SK-MEL-5 (cell line): ENCODE measurements at regions of chr5 and their contacts with region 1.

Region 1: DNA sequence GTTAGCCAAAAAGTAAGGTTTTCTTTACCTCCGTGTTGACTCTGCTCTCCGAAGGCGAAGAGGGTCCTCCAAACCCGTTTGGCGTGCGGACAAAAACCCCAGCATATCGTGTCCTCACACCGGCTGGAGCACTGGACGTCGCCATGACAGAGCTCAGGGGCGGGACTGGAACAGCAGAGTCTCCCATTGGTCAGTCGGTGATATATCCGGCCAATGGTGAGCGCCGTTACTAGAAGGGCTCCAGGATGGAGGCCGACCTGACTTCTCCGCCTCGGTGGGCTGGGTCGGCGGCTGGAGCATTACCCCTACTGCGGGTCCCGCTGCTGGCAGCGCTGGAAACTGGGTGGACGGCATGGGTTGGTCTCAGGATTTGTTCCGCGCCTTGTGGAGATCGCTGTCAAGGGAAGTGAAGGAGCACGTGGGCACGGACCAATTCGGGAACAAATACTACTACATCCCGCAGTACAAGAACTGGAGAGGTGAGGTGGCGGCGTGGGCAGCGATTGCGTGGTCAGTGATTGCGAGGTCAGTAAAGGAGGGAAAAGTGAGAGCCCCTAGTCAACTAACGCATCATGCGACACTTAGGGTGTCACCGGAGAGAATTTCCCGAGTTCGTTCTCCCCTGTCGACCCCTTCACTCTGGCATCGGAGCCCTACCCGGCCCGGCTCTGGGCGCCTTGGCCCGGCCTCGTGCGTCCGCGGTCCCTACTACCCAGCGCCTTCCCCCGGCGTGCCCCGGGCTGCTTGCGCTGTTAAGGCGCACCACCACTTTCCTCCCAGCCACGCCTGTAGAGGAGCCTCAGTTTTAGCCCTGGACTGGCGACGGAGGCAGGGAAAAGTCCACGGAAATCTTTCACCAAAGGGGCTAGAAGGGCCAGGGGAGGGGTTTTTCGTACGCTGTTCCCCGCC is at the starts of genes ERCC8 and NDUFAF2:
- DNase-seq: peak; percentile 94
- total RNA-seq, gene ERCC8: 13.6 and 13.9 TPM in 2 replicates
- total RNA-seq, gene NDUFAF2: 47.8 and 60.3 TPM in 2 replicates

Region 2: DNA sequence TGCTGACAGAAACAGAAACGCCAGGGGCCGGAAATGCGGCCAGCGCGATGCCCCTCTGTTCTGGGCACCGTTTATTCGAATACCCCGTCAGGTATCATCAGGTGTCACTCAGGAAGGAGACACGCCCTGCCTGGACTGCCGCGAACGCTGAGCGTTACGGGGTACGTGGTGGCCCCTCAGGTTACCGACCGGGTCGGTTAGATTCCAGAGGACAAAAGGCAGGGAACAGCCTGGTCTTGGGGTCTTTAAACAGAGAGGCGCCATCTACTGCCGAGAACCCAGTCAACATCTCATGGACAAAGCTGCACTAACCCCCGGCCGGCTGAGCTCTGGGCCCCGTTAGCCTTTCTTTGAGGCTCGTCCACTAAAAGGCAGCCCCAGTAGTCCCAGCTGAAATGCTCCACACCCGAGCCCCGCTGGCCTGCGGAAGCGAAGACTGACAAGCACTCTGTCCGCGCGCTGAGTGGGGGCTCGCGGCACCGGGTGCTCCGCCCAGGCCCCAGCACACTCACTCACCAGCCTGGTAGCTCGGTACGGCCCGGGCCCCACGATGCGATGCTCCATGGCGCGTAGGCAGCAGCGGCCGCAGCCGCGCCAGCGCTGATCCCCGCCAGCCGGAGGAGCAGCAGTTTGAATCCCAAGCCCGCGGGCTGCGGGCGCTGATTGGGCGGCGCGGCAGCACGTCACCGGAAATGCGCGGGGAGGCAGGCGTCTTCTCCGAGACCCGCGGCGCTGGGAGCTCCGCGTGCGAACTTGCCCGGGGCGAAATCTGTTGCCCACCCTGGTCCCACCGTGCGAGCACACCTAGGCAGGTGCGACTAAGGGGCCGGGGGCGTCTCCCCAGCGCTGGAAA is 245.4 kb before region 1 on chr5 and contains the start of gene DEPDC1B:
- in situ Hi-C with region 1: loop called (anchors 25 kb)
- DNase-seq: peak; percentile 88
- total RNA-seq, gene DEPDC1B: 18.8 and 21.5 TPM in 2 replicates